Activated CD4-positive, alpha-beta memory T cell treated with anti-CD3 and anti-CD28 coated beads, Interleukin-2, amount 10 ng/mL, durations not matched to agents 7 days and 5 days (primary cell): ENCODE measurements at regions of chr1 and their contacts with region 1.

Region 1: GRCh38 chr1:23634842-23635651 is 56.6 kb upstream of the RPL11 start:
- DNase-seq: peak; percentile 66
- H3K4me3 Mint-ChIP-seq: peak overlapping the region; percentile 53
- H3K27ac Mint-ChIP-seq: peak overlapping the region; percentile 22
- H3K4me1 Mint-ChIP-seq: peaks cover 25% of the 10 kb centered on the region
- H3K27me3 Mint-ChIP-seq: peaks cover 6% of the 10 kb centered on the region

Region 2: GRCh38 chr1:23524716-23525401 is 110.2 kb before region 1 on chr1:
- CTCF ChIA-PET with region 1: interaction called, 19 read pairs
- POLR2A ChIA-PET with region 1: interaction called, 5 read pairs
- DNase-seq: peak; percentile 70
- H3K4me3 Mint-ChIP-seq: peak overlapping the region; percentile 99
- H3K27ac Mint-ChIP-seq: peak overlapping the region; percentile 97
- H3K4me1 Mint-ChIP-seq: peaks cover 72% of the 10 kb centered on the region
- H3K27me3 Mint-ChIP-seq: no peaks in the 10 kb centered on the region

Region 3: GRCh38 chr1:23559136-23559984 is 75.7 kb before region 1 on chr1 and contains the start of gene ID3:
- CTCF ChIA-PET with region 1: interaction called, 545 read pairs
- POLR2A ChIA-PET with region 1: interaction called, 63 read pairs
- DNase-seq: peak; percentile 94
- H3K4me3 Mint-ChIP-seq: peak within 1 kb of the TSS; percentile 84
- H3K27ac Mint-ChIP-seq: peak within 1 kb of the TSS; percentile 73
- H3K4me1 Mint-ChIP-seq: peaks cover 59% of the 10 kb centered on the region
- H3K27me3 Mint-ChIP-seq: peaks cover 52% of the 10 kb centered on the region
- total RNA-seq, gene ID3: 14.7 to 14.8 TPM

Region 4: DNA sequence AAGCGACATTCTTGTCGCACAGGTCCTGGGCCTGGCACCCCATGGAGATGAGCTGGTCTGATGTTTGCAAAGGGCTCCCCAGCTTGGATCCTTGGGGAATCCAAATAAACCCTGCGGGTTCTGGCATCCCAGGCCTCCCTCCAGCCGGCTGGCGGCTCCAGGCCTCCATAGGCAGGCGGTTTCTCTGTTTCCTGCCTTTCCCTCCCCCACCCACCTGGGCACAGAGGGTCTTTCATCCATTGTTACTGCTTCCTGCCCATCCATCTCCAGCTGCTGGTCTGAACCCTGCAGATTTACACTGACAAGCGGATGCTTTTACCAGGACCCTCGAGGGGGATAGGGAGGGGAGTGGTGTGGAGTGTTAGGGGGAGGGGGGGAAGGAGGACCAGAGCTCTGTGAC is 36.6 kb before region 1 on chr1:
- CTCF ChIA-PET with region 1: interaction called, 22 read pairs
- POLR2A ChIA-PET with region 1: interaction called, 4 read pairs
- DNase-seq: no peak
- H3K4me3 Mint-ChIP-seq: no peak overlapping the region
- H3K27ac Mint-ChIP-seq: no peak overlapping the region
- H3K4me1 Mint-ChIP-seq: peaks cover 48% of the 10 kb centered on the region
- H3K27me3 Mint-ChIP-seq: no peaks in the 10 kb centered on the region

Region 5: GRCh38 chr1:23657659-23658275 is 22.7 kb after region 1 on chr1:
- CTCF ChIA-PET with region 1: interaction called, 11 read pairs
- POLR2A ChIA-PET with region 1: no interaction called
- DNase-seq: peak; percentile 46
- H3K4me3 Mint-ChIP-seq: no peak overlapping the region
- H3K27ac Mint-ChIP-seq: no peak overlapping the region
- H3K4me1 Mint-ChIP-seq: no peaks in the 10 kb centered on the region
- H3K27me3 Mint-ChIP-seq: no peaks in the 10 kb centered on the region

Region 6: DNA sequence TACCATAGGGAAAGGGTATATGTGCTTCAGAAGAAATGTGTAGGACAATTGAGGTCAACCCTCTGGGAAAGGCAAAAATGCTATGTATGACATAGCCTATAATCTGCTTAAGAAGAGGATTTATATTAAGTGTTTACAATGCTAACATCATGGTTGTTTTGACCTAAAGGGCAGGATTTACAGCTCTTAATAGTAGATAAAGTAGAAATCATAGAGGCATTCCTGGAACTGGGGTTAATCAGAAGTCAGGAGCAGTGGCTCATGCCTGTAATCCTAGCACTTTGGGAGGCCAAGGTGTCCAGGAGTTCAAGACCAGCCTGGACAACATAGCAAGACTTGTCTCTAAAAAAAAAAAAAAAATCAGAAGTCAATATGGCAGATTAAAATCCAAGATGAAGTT is 47.9 kb after region 1 on chr1:
- CTCF ChIA-PET with region 1: no interaction called
- POLR2A ChIA-PET with region 1: no interaction called
- DNase-seq: no peak
- H3K4me3 Mint-ChIP-seq: no peak overlapping the region
- H3K27ac Mint-ChIP-seq: no peak overlapping the region
- H3K4me1 Mint-ChIP-seq: no peaks in the 10 kb centered on the region
- H3K27me3 Mint-ChIP-seq: peaks cover 17% of the 10 kb centered on the region